GM12878 (cell line): ENCODE measurements at regions of chr4 and their contacts with region 1.

Region 1: DNA sequence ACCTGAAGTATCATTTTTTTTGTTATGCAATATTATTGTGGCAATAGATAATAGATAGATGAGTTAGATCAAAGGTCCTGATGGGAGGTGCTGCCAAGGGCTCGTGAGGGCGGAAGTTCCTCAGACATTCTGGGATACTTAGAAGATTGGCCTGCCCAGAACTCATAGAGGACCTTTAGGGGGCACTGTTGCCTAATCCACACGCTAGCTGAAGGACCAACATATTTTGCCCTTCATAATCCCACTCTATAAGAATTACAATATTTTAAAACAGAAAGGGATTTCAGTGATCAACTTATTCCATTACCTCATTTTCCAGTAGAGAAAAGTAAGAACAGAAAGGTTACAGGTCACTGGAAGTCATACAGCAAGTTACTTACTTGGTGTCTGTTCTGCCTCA is 22.9 kb upstream of the COX7B2 start:
- DNase-seq: peak; percentile 2
- ATAC-seq: peak; percentile 96
- H3K4me3 ChIP-seq: no peak overlapping the region
- H3K27ac ChIP-seq: no peak overlapping the region
- H3K4me1 ChIP-seq: no peaks in the 10 kb centered on the region
- H3K27me3 ChIP-seq: no peaks in the 10 kb centered on the region
- CTCF ChIP-seq: peak; percentile 58 to 76 (median 63)
- EP300 ChIP-seq: no peak
- POLR2A ChIP-seq: no peak
- RAD21 ChIP-seq: peak; percentile 79

Region 2: GRCh38 chr4:45954276-45954675 is 977.7 kb before region 1 on chr4:
- CTCF ChIA-PET with region 1: no interaction called
- POLR2A ChIA-PET with region 1: no interaction called
- RAD21 ChIA-PET with region 1: no interaction called
- SMC1A ChIA-PET with region 1: no interaction called
- in situ Hi-C with region 1: no loop called
- intact Hi-C with region 1: no loop called
- DNase-seq: no peak
- ATAC-seq: no peak
- H3K4me3 ChIP-seq: no peak overlapping the region
- H3K27ac ChIP-seq: no peak overlapping the region
- H3K4me1 ChIP-seq: no peaks in the 10 kb centered on the region
- H3K27me3 ChIP-seq: no peaks in the 10 kb centered on the region
- CTCF ChIP-seq: no peak
- EP300 ChIP-seq: no peak
- POLR2A ChIP-seq: no peak
- RAD21 ChIP-seq: no peak

Region 3: GRCh38 chr4:46698891-46699290 is 233.1 kb before region 1 on chr4:
- CTCF ChIA-PET with region 1: no interaction called
- POLR2A ChIA-PET with region 1: no interaction called
- RAD21 ChIA-PET with region 1: no interaction called
- SMC1A ChIA-PET with region 1: no interaction called
- in situ Hi-C with region 1: no loop called
- intact Hi-C with region 1: no loop called
- DNase-seq: no peak
- ATAC-seq: no peak
- H3K4me3 ChIP-seq: no peak overlapping the region
- H3K27ac ChIP-seq: no peak overlapping the region
- H3K4me1 ChIP-seq: no peaks in the 10 kb centered on the region
- H3K27me3 ChIP-seq: no peaks in the 10 kb centered on the region
- CTCF ChIP-seq: no peak
- EP300 ChIP-seq: no peak
- POLR2A ChIP-seq: no peak
- RAD21 ChIP-seq: no peak

Region 4: DNA sequence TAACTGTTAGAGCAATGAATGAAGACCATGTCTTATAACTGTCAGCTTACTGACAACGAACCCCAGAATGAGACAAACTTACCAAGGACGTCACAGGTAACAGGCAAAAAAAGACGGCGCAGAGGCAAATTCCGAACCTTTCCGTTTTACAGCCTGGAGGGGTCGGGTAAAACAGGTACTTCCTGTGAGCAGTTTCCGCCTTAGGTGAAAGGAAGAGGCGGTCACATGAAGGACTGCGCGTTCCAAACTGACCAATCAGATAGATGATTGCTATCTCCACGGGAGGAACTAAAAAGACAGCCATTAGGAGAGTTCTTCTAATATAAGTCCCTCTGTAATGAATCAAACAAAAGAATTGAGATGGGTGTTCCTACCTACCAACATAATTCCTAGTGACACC is 22.9 kb before region 1 on chr4 and contains the start of gene COX7B2:
- CTCF ChIA-PET with region 1: no interaction called
- POLR2A ChIA-PET with region 1: no interaction called
- RAD21 ChIA-PET with region 1: no interaction called
- SMC1A ChIA-PET with region 1: no interaction called
- in situ Hi-C with region 1: no loop called
- intact Hi-C with region 1: no loop called
- DNase-seq: no peak
- ATAC-seq: no peak
- H3K4me3 ChIP-seq: no peak within 1 kb of the TSS
- H3K27ac ChIP-seq: no peak within 1 kb of the TSS
- H3K4me1 ChIP-seq: no peaks in the 10 kb centered on the region
- H3K27me3 ChIP-seq: no peaks in the 10 kb centered on the region
- CTCF ChIP-seq: no peak
- EP300 ChIP-seq: no peak
- POLR2A ChIP-seq: no peak
- RAD21 ChIP-seq: no peak
- polyA plus RNA-seq, gene COX7B2: not detected

Region 5: GRCh38 chr4:46975812-46976553 is 44.0 kb after region 1 on chr4:
- CTCF ChIA-PET with region 1: interaction called, 6 read pairs
- POLR2A ChIA-PET with region 1: interaction called, 6 read pairs
- RAD21 ChIA-PET with region 1: interaction called, 7 read pairs
- SMC1A ChIA-PET with region 1: interaction called, 16 read pairs
- in situ Hi-C with region 1: no loop called
- intact Hi-C with region 1: no loop called
- DNase-seq: peak; percentile 23
- ATAC-seq: peak; percentile 75
- H3K4me3 ChIP-seq: no peak overlapping the region
- H3K27ac ChIP-seq: peak overlapping the region; percentile 58
- H3K4me1 ChIP-seq: no peaks in the 10 kb centered on the region
- H3K27me3 ChIP-seq: no peaks in the 10 kb centered on the region; a peak in 1 of 4 replicates
- CTCF ChIP-seq: no peak
- EP300 ChIP-seq: 0 out of 4 replicates have a peak, but pooled peaks of 1 of the 2 experiments have one; percentile 11
- POLR2A ChIP-seq: no peak
- RAD21 ChIP-seq: no peak

Region 6: GRCh38 chr4:47002593-47002992 is 70.6 kb after region 1 on chr4:
- CTCF ChIA-PET with region 1: interaction called, 46 read pairs
- POLR2A ChIA-PET with region 1: no interaction called
- RAD21 ChIA-PET with region 1: interaction called, 8 read pairs
- SMC1A ChIA-PET with region 1: interaction called, 70 read pairs
- in situ Hi-C with region 1: no loop called
- intact Hi-C with region 1: loop called (anchors 1 kb)
- DNase-seq: no peak
- ATAC-seq: peak; percentile 73
- H3K4me3 ChIP-seq: no peak overlapping the region
- H3K27ac ChIP-seq: no peak overlapping the region
- H3K4me1 ChIP-seq: no peaks in the 10 kb centered on the region
- H3K27me3 ChIP-seq: no peaks in the 10 kb centered on the region
- CTCF ChIP-seq: peak in 2 of 3 experiments; percentile 32 to 40; a peak in 3 of 6 replicates
- EP300 ChIP-seq: no peak
- POLR2A ChIP-seq: no peak
- RAD21 ChIP-seq: peak; percentile 74

Region 7: GRCh38 chr4:47032415-47033106 is 100.6 kb after region 1 on chr4:
- CTCF ChIA-PET with region 1: interaction called, 79 read pairs
- POLR2A ChIA-PET with region 1: no interaction called
- RAD21 ChIA-PET with region 1: interaction called, 52 read pairs
- SMC1A ChIA-PET with region 1: interaction called, 57 read pairs
- in situ Hi-C with region 1: loop called (anchors 5 kb)
- intact Hi-C with region 1: loop called (anchors 1 kb)
- DNase-seq: no peak
- ATAC-seq: peak; percentile 98
- H3K4me3 ChIP-seq: peak overlapping the region; percentile 21; the same call in 1 of the 2 replicates
- H3K27ac ChIP-seq: no peak overlapping the region
- H3K4me1 ChIP-seq: no peaks in the 10 kb centered on the region
- H3K27me3 ChIP-seq: peaks cover 2 to 10% of the 10 kb centered on the region in 2 experiments
- CTCF ChIP-seq: peak; percentile 62 to 83 (median 78)
- EP300 ChIP-seq: no peak
- POLR2A ChIP-seq: no peak
- RAD21 ChIP-seq: peak; percentile 71

Region 8: GRCh38 chr4:47383829-47384427 is 451.9 kb after region 1 on chr4:
- CTCF ChIA-PET with region 1: interaction called, 14 read pairs
- POLR2A ChIA-PET with region 1: no interaction called
- RAD21 ChIA-PET with region 1: interaction called, 14 read pairs
- SMC1A ChIA-PET with region 1: interaction called, 8 read pairs
- in situ Hi-C with region 1: loop called (anchors 10 kb)
- intact Hi-C with region 1: loop called (anchors 5 kb)
- DNase-seq: no peak
- ATAC-seq: peak; percentile 44; the same call in 2 of the 3 replicates
- H3K4me3 ChIP-seq: no peak overlapping the region
- H3K27ac ChIP-seq: no peak overlapping the region
- H3K4me1 ChIP-seq: no peaks in the 10 kb centered on the region
- H3K27me3 ChIP-seq: no peaks in the 10 kb centered on the region
- CTCF ChIP-seq: peak; percentile 19 to 59 (median 37); a peak in 4 of 6 replicates
- EP300 ChIP-seq: no peak
- POLR2A ChIP-seq: no peak
- RAD21 ChIP-seq: peak; percentile 83